ENCODE measurements at regions of chr1 and their contacts with region 1.

Region 1: GRCh38 chr1:205485338-205486228 is 18.9 kb upstream of the CDK18 start:
- DNase-seq: peak; percentile 53 to 76 (median 69)
- ATAC-seq: peak; percentile 68 to 76
- H3K4me3 ChIP-seq: no peak overlapping the region
- H3K27ac ChIP-seq: no peak overlapping the region
- H3K4me1 ChIP-seq: no peaks in the 10 kb centered on the region
- H3K27me3 ChIP-seq: no peaks in the 10 kb centered on the region

Region 2: GRCh38 chr1:205354259-205354904 is 131.2 kb before region 1 on chr1:
- intact Hi-C with region 1: loop called in 3 of 4 experiments (anchors 2 to 10 kb)
- DNase-seq: peak in 2 of 3 donors; percentile 34 to 68
- ATAC-seq: peak; percentile 40 to 60
- H3K4me3 ChIP-seq: no peak overlapping the region
- H3K27ac ChIP-seq: no peak overlapping the region
- H3K4me1 ChIP-seq: no peaks in the 10 kb centered on the region
- H3K27me3 ChIP-seq: no peaks in the 10 kb centered on the region

Region 3: GRCh38 chr1:205375835-205376545 is 109.6 kb before region 1 on chr1:
- intact Hi-C with region 1: no loop called
- DNase-seq: no peak
- ATAC-seq: peak; percentile 37 to 41
- H3K4me3 ChIP-seq: no peak overlapping the region
- H3K27ac ChIP-seq: no peak overlapping the region
- H3K4me1 ChIP-seq: no peaks in the 10 kb centered on the region
- H3K27me3 ChIP-seq: no peaks in the 10 kb centered on the region

Region 4: GRCh38 chr1:205396967-205397616 is 88.5 kb before region 1 on chr1:
- intact Hi-C with region 1: loop called (anchors 2 to 10 kb)
- DNase-seq: no peak
- ATAC-seq: peak in 1 of 2 donors; percentile 55
- H3K4me3 ChIP-seq: no peak overlapping the region
- H3K27ac ChIP-seq: no peak overlapping the region
- H3K4me1 ChIP-seq: no peaks in the 10 kb centered on the region
- H3K27me3 ChIP-seq: no peaks in the 10 kb centered on the region

Region 5: GRCh38 chr1:205430696-205431305 is 54.8 kb before region 1 on chr1:
- intact Hi-C with region 1: loop called in 1 of 4 experiments (anchors 10 kb)
- DNase-seq: peak; percentile 60 to 82 (median 82)
- ATAC-seq: peak; percentile 75 to 79
- H3K4me3 ChIP-seq: peak overlapping the region; percentile 61
- H3K27ac ChIP-seq: no peak overlapping the region
- H3K4me1 ChIP-seq: peaks cover 2% of the 10 kb centered on the region
- H3K27me3 ChIP-seq: no peaks in the 10 kb centered on the region

Region 6: GRCh38 chr1:205523891-205524793 is 38.6 kb after region 1 on chr1:
- intact Hi-C with region 1: loop called (anchors 1 to 5 kb)
- DNase-seq: peak; percentile 81 to 92 (median 88)
- ATAC-seq: peak; percentile 23 to 60
- H3K4me3 ChIP-seq: no peak overlapping the region
- H3K27ac ChIP-seq: no peak overlapping the region
- H3K4me1 ChIP-seq: peaks cover 11% of the 10 kb centered on the region
- H3K27me3 ChIP-seq: no peaks in the 10 kb centered on the region

Region 7: DNA sequence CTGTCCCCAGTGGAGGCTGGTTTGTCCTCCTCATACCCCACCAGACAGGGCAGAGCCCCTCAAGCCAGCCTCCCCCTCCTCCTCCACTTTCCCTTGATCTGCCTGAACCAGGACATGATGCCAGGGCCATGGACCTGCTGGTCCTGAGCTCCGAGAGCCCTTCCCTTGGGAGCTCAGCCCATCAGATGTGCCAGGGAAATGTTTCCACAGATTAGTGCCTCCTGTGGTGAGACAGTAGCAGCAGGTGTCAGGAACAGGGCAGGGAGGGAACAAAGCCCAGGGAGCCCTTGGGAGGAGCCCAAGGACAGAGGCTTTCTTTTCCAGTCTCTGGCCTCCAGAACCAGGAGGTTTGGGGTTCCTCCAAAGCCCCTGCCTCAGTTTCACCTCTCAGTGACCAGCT is 342.0 kb after region 1 on chr1:
- intact Hi-C with region 1: no loop called
- DNase-seq: no peak
- ATAC-seq: peak; percentile 44 to 68
- H3K4me3 ChIP-seq: no peak overlapping the region
- H3K27ac ChIP-seq: peak overlapping the region; percentile 98
- H3K4me1 ChIP-seq: peaks cover 12% of the 10 kb centered on the region
- H3K27me3 ChIP-seq: no peaks in the 10 kb centered on the region

Measured in right cardiac atrium (tissue), 5 donors.